Lower leg skin (tissue), 4 donors: ENCODE measurements at regions of chr9 and their contacts with region 1.

Region 1: GRCh38 chr9:34899535-34900158 is 58.4 kb upstream of the PHF24 start:
- DNase-seq: peak; percentile 76 to 95
- H3K4me3 ChIP-seq: no peak overlapping the region
- CTCF ChIP-seq: peak in 1 of 3 donors; percentile 50
- POLR2A ChIP-seq: no peak

Region 2: DNA sequence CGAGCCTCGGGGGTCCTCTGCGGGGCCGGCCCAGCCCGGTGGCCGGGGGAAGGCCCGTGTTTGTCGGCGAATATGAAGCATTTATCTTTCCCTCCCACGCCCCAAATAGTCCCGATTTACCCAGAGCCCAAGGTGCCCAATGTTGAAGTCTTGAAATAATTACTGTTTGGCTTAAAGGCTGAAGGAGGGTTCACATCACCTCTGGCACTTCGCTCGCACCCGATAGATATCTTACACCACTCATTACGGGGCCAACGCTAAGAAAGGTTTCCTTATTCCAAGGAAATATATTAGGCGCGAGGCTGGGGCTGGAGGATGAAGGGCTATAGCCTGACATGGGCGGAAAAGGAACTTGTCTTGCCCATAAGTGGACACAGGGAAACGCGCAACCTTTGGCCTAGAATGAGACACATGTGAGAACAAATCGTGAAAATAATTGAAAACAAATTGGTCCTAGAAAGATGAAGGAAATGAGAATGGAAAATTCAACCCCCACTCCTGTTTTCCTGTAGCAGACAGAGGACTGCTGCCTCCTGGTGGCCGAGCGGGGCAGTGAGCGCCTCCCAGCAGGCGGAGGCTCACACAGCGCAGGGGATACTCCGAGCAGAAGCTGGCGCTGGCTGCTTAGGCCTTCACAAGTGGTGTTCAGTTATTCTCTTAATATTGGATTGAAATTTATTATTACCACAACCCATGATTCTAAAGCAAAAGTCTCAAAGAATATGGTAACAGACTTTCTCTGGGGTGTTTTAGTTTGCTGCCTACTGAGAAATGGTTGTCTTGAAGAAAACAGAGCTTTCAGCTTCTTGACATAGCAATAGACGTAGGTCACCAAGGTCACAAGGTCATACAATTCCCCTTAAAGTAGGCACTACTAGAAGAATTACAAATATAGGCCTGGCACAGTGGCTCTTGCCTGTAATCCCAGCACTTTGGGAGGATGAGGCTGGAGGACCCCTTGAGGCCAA is 197.6 kb before region 1 on chr9:
- intact Hi-C with region 1: loop called (anchors 10 kb)
- DNase-seq: peak; percentile 86 to 97
- H3K4me3 ChIP-seq: peak overlapping the region; percentile 29
- CTCF ChIP-seq: peak in 2 of 3 donors; percentile 78 to 94
- POLR2A ChIP-seq: no peak

Region 3: DNA sequence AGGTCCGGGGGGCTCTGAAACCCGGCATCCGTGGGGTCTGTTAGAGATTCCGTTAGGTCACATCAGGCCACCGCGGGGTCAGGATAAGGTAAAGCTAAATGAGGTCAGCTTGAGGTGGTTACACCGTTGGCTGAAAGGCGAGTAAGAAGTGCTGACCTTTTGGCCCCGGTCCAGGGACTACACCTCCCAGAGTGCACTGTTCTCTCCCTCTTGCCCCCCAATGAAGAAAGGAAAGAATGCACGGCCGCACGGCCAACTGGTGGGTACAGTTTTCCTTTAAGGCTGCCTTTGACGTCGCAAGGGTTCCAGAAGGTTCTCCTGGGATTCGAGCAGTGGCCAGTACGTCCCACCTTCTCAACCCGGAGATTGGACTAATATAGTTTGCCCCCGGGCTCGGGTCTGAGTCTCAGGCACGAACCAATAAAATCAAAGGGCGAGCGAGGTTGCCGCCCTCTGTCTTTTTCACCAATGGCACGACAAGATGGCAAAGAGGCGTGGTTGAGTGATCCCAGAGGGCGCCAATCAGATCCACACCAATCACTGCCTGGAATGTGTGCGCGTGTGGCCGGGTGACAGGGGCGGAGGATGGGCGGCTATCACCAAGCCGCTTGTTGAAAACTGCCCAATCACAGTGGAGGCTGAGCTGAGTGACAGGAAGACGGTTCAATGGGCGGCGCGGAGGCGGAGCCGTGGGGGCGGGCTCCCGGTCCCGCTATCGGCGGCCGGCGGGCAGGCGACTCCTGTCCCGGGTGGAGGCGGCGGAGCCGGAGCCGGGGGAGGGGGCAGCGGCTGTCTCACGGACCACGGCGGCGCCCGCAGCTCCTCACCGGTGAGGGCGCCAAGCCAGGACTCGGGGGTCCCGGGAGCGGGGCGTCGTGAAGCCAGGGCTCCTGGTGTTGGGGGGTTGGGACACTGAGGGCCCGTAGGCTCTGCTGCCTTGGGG is 89.6 kb after region 1 on chr9 and contains the start of gene DNAJB5:
- intact Hi-C with region 1: loop called (anchors 10 kb)
- DNase-seq: peak; percentile 100
- H3K4me3 ChIP-seq: peak within 1 kb of the TSS; percentile 79
- CTCF ChIP-seq: no peak
- POLR2A ChIP-seq: peak in 1 of 2 donors; percentile 26
- total RNA-seq, gene DNAJB5: 1.1 to 3.7 (median 1.9) TPM